ENCODE measurements at regions of chr15 and their contacts with region 1.

Region 1: GRCh38 chr15:101088788-101089583 is 162.9 kb downstream of the CHSY1 start:
- DNase-seq: peak; percentile 82
- ATAC-seq: peak; percentile 85
- H3K4me3 Mint-ChIP-seq: no peak overlapping the region
- H3K27ac Mint-ChIP-seq: peak overlapping the region; percentile 6
- H3K4me1 Mint-ChIP-seq: peaks cover 31% of the 10 kb centered on the region
- H3K27me3 Mint-ChIP-seq: peaks cover 2% of the 10 kb centered on the region

Region 2: GRCh38 chr15:101014921-101015841 is 73.8 kb before region 1 on chr15:
- CTCF ChIA-PET with region 1: interaction called, 11 read pairs
- DNase-seq: peak; percentile 76
- ATAC-seq: peak; percentile 76
- H3K4me3 Mint-ChIP-seq: no peak overlapping the region
- H3K27ac Mint-ChIP-seq: no peak overlapping the region
- H3K4me1 Mint-ChIP-seq: no peaks in the 10 kb centered on the region
- H3K27me3 Mint-ChIP-seq: peaks cover 12% of the 10 kb centered on the region

Region 3: GRCh38 chr15:101099183-101099582 is 10.2 kb after region 1 on chr15:
- CTCF ChIA-PET with region 1: interaction called, 12 read pairs
- DNase-seq: peak; percentile 81
- ATAC-seq: peak; percentile 89
- H3K4me3 Mint-ChIP-seq: no peak overlapping the region
- H3K27ac Mint-ChIP-seq: peak overlapping the region; percentile 66
- H3K4me1 Mint-ChIP-seq: peaks cover 20% of the 10 kb centered on the region
- H3K27me3 Mint-ChIP-seq: peaks cover 17% of the 10 kb centered on the region

Region 4: DNA sequence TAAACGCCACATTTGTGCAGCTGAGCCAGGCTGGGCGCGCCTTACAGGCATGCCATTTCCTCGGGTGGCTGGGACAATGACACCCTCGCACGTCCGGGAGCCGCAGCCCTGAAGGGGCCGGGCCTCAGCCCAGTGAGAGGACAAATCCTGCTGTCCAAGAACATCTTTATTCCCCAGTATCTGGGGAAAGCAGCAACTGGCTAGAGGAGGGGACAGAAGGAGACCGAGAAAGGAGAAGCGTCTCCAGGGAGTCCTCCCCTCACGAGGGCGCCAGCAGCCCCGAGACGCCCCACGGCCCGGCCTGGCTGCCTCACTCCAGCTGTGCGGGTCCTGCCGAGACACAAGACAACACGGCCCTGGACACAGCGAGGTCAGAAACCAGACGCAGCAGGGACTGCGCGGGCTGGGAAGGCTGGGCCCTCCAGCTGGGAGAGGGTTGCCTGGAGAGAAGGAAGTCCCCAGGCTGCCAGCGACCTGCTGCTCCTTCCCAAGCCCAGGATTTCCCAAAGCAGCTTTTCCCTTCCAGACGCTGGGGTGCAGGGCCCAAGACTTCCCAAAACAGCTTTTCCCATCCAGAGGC is 32.6 kb after region 1 on chr15:
- CTCF ChIA-PET with region 1: interaction called, 10 read pairs
- DNase-seq: no peak
- ATAC-seq: no peak
- H3K4me3 Mint-ChIP-seq: no peak overlapping the region
- H3K27ac Mint-ChIP-seq: peak overlapping the region; percentile 39
- H3K4me1 Mint-ChIP-seq: peaks cover 47% of the 10 kb centered on the region
- H3K27me3 Mint-ChIP-seq: no peaks in the 10 kb centered on the region

Region 5: DNA sequence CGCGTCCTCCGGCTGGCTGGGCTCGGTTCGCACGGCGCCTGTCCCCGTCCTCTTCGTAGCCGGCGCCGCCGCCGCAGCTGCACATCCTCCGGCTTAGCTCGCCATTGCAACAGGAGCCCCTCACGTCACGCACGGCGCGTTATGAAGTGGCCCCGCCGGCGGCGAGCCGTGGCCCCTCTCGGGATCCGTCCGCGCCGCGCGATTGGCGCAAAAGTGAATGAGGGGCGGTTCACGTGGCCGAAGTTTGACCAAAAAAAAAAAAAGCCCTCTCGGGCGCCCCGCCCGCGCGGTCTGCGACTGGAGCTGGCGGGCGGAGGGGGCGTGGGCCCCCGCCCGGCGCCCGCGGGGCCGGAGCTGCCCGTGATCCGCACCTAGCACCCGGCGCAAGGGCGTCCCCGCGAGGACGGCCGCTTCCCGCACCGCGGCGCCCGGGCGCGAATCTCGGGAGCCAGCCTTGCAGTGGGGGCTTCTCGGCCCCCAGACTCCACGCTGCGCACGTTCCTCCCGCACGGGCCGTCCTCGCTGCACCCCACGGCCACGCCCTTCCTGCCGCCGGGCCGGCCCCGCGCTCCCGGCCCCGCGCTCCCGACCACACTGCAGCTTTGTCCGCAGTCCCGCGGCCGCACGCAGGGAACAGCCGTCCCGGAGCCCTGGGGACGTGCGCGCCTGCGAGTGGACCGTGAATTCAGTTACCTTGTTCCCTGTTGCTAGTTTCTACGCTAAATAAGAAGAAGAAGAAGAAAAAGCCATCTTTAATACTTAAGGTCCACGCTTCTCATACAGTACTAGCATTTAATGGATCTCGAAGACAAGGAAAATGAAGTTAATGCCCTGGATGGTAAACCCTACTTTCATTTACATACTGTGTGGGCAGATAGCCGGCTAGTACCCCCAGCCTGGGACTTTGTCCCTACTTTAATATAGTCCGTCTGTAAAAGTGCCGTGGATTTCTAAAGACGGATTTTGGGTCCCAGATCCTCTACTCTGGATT is 163.1 kb after region 1 on chr15 and contains the start of gene CHSY1:
- CTCF ChIA-PET with region 1: interaction called, 244 read pairs
- DNase-seq: peak; percentile 92
- ATAC-seq: peak; percentile 82
- H3K4me3 Mint-ChIP-seq: peak within 1 kb of the TSS; percentile 85
- H3K27ac Mint-ChIP-seq: peak within 1 kb of the TSS; percentile 89
- H3K4me1 Mint-ChIP-seq: peaks cover 69% of the 10 kb centered on the region
- H3K27me3 Mint-ChIP-seq: no peaks in the 10 kb centered on the region
- total RNA-seq, gene CHSY1: 50.5 to 59.4 TPM